ENCODE measurements at regions of chr18 and their contacts with region 1.

Region 1: DNA sequence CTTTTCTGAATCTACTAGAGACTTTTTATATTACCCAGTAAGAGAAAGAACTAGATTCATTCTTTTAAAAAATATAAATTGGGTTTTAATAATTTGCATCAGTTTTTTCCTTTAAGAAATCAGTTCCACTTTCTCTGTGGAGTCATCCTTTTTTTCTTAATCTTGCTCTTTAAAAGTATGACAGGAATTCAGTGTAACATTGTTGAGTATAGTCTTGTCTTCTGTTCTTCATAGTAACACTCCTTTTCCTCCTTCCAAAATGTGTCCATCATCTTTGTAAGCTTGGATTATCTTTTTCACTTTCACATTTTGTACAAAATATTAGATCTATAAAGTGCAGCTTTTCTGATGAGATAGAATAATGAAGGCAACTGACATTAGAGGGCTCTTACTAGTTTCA is 135.4 kb downstream of the HAUS1 start:
- DNase-seq: no peak

Region 2: DNA sequence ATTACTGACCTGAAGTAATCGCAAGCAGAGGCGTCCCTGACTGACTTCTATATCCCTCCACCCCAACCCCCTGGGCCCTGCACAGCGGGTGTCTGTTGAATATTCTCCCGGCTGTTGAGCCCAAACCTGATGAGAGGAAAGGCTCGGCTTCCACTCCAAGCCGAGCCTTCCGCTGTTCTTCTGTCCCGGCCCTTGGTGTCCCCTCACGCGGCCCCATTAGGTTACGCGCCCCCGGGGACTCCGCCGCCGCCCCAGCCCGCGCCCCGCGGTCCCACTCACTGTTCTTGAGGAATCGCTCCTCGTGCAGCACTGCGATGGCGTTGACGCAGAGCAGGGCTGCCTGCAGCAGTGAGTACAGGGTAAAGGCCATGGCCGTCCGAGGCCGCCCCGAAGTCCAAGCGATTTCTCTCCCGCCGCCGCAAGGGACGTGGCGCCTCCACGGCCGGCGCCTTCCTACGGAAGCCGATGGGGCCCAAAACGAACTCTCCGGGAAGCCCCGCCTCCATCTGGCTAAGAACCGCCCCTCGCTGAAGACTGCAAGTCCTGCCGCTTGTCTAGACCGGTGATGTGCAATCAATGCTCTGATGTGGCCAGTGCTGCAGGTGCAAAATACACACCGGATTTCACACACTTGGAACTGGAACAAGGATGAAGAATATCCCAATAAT is 936.5 kb after region 1 on chr18 and contains the start of gene IER3IP1:
- intact Hi-C with region 1: loop called in 1 of 2 experiments (anchors 5 kb)
- DNase-seq: peak; percentile 98
- total RNA-seq, gene IER3IP1: 11.1 to 13.7 TPM

Measured in posterior vena cava (tissue), 2 donors.